Caco-2 (cell line): ENCODE measurements at regions of chr19 and their contacts with region 1.

Region 1: DNA sequence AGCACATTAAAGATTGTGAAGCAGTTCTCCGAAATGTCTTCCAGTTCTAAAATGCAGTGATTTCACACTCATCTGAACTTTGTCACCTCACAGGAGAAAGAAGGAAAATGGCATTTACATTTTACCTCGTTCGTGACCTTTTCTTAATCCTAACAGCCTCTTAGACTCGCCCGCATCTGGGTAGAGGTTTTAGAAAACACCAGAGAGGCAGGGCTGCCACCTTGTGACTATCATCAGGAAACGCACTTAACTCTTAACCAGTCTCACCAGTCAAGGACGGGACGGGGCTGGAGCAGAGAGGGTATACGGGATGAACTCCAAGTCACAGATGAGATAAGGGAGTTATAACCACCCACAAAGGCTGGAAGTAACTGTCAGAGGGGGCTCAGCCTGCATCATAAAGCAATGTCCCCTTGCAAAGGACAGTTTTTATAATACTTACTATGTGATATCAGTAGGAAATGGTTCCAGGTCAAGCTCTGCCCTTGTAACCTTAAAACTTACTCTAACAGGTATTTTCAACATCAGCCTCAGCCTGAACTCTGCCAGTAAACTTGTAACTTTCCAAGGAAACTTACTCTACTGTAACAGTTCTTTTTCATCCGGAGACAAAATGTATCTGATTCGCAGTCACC is 8.6 kb upstream of the CEACAM6 start:
- DNase-seq: peak; percentile 73 to 76
- H3K4me3 ChIP-seq: no peak overlapping the region
- H3K4me3 Mint-ChIP-seq: no peak overlapping the region
- H3K27ac Mint-ChIP-seq: no peak overlapping the region
- H3K4me1 ChIP-seq: peaks cover 15% of the 10 kb centered on the region; the same call in 1 of the 2 replicates
- H3K4me1 Mint-ChIP-seq: peaks cover 16% of the 10 kb centered on the region
- H3K27me3 ChIP-seq: no peaks in the 10 kb centered on the region
- H3K27me3 Mint-ChIP-seq: no peaks in the 10 kb centered on the region
- CTCF ChIP-seq: peak; percentile 85 to 90

Region 2: DNA sequence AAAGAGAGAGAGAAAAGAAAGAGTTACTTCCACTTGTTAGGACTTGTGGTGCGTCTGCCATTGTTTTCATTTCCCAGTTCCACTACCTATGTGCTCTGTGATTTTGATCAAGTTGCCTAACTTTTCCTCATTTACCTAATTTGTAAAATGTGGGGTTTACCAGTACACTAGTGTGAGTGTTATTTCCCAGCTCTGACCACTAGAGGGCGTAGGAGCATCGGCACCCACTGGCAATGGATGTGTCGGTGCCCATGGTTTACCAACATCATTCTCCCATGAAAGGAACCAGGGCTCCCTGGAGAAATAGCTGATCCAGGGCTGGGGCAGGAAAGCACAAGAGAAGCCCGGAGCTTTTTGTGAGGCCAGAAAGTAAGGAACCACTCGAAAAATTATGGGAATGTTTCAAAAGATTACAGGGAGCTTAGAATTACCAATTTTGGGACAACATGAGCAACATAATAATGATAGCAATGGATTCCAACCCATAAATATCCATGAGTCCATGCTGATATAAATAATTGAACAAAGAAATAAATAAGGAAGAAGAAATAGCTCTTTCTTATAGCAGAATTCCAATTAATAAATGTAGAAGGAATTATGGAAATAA is 104.7 kb before region 1 on chr19:
- CTCF ChIA-PET with region 1: interaction called, 3 read pairs
- POLR2A ChIA-PET with region 1: no interaction called
- intact Hi-C with region 1: loop called (anchors 5 kb)
- DNase-seq: peak; percentile 64 to 78
- H3K4me3 ChIP-seq: no peak overlapping the region
- H3K4me3 Mint-ChIP-seq: no peak overlapping the region
- H3K27ac Mint-ChIP-seq: no peak overlapping the region
- H3K4me1 ChIP-seq: no peaks in the 10 kb centered on the region
- H3K4me1 Mint-ChIP-seq: no peaks in the 10 kb centered on the region
- H3K27me3 ChIP-seq: no peaks in the 10 kb centered on the region; the same call in 1 of the 2 replicates
- H3K27me3 Mint-ChIP-seq: peaks cover 3% of the 10 kb centered on the region
- CTCF ChIP-seq: peak; percentile 87 to 95

Region 3: GRCh38 chr19:41671491-41671890 is 75.2 kb before region 1 on chr19:
- CTCF ChIA-PET with region 1: no interaction called
- POLR2A ChIA-PET with region 1: no interaction called
- intact Hi-C with region 1: no loop called
- DNase-seq: no peak
- H3K4me3 ChIP-seq: no peak overlapping the region
- H3K4me3 Mint-ChIP-seq: no peak overlapping the region
- H3K27ac Mint-ChIP-seq: no peak overlapping the region
- H3K4me1 ChIP-seq: no peaks in the 10 kb centered on the region
- H3K4me1 Mint-ChIP-seq: no peaks in the 10 kb centered on the region
- H3K27me3 ChIP-seq: no peaks in the 10 kb centered on the region
- H3K27me3 Mint-ChIP-seq: peaks cover 8% of the 10 kb centered on the region
- CTCF ChIP-seq: no peak